ENCODE measurements at regions of chr11 and their contacts with region 1.

Region 1: DNA sequence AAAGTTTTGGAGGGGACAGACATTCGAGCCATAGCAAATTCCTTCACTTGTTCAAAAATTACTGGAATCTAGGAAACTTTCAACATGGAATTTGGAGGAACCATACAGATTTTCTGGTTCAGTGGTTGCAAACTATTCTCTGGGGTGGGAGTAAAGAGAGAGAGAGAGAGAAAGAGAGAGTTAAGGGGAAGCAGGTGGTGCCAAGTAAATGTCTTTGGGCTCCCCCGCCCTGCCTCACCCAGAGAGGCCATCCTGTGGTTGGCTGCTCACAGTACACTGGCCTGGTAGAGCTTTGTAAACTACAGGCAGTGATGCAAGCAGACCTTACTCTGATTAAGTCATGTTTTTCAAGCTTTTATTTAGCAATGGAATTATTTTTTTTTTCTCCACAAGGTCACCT is 82.6 kb downstream of the ADAMTS15 start:
- DNase-seq: no peak
- H3K4me3 Mint-ChIP-seq: no peak overlapping the region
- H3K27ac Mint-ChIP-seq: no peak overlapping the region
- H3K4me1 Mint-ChIP-seq: peaks cover 14% of the 10 kb centered on the region
- H3K27me3 Mint-ChIP-seq: no peaks in the 10 kb centered on the region
- CTCF ChIP-seq: no peak

Region 2: DNA sequence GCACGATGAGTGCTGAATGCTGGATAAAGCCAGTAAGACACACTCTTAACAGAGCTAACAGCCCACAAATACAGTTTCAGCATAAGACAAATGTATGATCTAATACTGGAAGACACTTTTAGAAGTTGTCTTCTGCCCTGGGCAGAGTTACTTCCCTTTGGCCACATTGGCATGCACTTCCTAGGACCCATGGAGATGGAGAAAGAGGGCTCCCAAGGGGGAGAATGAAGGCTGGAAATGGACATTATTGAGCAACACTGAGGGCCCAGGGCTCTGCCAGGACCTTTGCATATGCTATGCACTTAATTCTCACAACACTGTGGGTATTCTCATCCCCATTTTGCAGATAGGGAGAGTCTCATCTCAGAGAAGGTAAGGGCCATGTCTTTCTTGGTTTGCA is 40.5 kb after region 1 on chr11:
- CTCF ChIA-PET with region 1: no interaction called
- POLR2A ChIA-PET with region 1: no interaction called
- intact Hi-C with region 1: no loop called
- DNase-seq: no peak
- H3K4me3 Mint-ChIP-seq: no peak overlapping the region
- H3K27ac Mint-ChIP-seq: no peak overlapping the region
- H3K4me1 Mint-ChIP-seq: peaks cover 2% of the 10 kb centered on the region
- H3K27me3 Mint-ChIP-seq: no peaks in the 10 kb centered on the region
- CTCF ChIP-seq: no peak

Region 3: GRCh38 chr11:130671801-130672700 is 141.0 kb after region 1 on chr11:
- CTCF ChIA-PET with region 1: no interaction called
- POLR2A ChIA-PET with region 1: no interaction called
- intact Hi-C with region 1: no loop called
- DNase-seq: peak; percentile 1
- H3K4me3 Mint-ChIP-seq: no peak overlapping the region
- H3K27ac Mint-ChIP-seq: no peak overlapping the region
- H3K4me1 Mint-ChIP-seq: peaks cover 17% of the 10 kb centered on the region
- H3K27me3 Mint-ChIP-seq: no peaks in the 10 kb centered on the region
- CTCF ChIP-seq: no peak

Region 4: DNA sequence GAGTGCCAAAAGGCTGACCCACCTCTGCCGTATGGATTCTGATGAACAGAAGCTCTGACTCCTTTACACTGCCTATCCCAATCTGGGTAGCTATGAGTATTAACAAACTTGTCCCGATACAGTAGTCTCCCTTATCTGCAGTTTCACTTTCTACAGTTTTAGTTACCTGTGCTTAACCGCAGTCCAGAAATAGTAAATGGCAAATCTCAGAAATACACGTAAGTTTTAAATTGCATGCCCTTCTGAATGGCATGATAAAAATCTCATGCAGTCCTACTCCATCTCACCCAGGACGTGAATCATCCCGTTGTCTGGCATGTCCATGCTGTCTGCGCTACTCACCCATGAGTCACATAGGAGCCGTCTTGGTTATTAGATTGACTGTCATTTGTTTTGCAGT is 316.5 kb after region 1 on chr11:
- CTCF ChIA-PET with region 1: no interaction called
- POLR2A ChIA-PET with region 1: no interaction called
- intact Hi-C with region 1: loop called (anchors 10 kb)
- DNase-seq: peak; percentile 92
- H3K4me3 Mint-ChIP-seq: peak overlapping the region; percentile 57
- H3K27ac Mint-ChIP-seq: peak overlapping the region; percentile 55
- H3K4me1 Mint-ChIP-seq: peaks cover 18% of the 10 kb centered on the region
- H3K27me3 Mint-ChIP-seq: no peaks in the 10 kb centered on the region
- CTCF ChIP-seq: no peak

Region 5: DNA sequence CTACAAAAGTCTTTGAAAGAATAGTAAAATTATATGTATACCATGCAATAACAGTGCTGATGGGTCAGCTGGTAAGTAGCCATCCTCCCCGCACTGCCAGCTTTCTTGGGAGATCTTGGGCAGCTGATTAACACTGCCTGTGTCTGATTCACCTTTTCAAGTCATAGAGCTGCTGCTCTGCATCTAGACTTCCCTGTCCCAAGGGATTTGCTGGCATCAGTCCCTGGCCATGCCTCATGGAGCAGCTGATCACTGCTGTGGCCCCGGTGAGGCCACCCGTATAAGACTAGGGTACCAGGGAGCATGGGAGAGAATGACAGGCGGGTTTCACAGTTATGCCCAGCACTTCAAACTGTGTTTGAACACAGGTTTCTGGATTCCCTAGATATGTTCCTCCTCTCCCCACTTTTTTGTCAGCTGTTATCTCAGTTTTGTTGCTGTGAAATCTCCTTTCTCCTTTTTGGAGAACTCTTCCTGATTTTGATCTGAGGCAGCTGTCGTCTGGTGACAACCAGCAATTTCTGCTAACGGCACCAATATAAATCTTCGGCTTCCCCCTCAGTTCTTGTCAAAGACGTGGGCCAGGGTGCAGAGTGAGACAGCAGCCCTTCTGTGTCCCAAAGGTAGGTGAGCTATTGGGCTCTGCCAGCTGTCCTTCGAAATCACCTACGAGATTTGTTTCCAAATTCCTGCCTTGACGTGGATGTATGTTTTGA is 1278.3 kb after region 1 on chr11:
- CTCF ChIA-PET with region 1: no interaction called
- POLR2A ChIA-PET with region 1: no interaction called
- intact Hi-C with region 1: no loop called
- DNase-seq: no peak
- H3K4me3 Mint-ChIP-seq: no peak overlapping the region
- H3K27ac Mint-ChIP-seq: no peak overlapping the region
- H3K4me1 Mint-ChIP-seq: no peaks in the 10 kb centered on the region
- H3K27me3 Mint-ChIP-seq: no peaks in the 10 kb centered on the region
- CTCF ChIP-seq: no peak